MCF 10A (cell line): ENCODE measurements at regions of chr3 and their contacts with region 1.

Region 1: DNA sequence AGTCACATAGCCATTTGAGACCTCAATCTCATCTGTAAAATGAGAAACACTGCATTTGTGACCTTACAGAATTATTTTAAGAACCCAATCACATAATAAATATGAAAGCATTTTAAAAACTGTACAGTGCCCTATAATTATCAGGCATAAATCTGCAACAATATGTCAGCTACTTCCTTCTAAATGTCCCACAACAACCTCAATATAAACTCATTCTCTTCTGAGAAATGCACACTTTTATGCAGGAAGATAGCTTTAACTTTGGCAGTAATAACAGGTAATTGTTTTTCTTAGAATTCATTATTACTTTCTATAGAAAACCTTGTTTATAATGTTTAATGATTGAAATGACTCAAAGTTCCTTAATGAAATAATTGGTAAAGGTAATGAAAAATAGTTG is 400.7 kb upstream of the AGTR1 start:
- DNase-seq: no peak
- H3K4me3 Mint-ChIP-seq: no peak overlapping the region
- H3K27ac Mint-ChIP-seq: no peak overlapping the region
- H3K4me1 Mint-ChIP-seq: no peaks in the 10 kb centered on the region
- H3K27me3 Mint-ChIP-seq: peaks cover 68% of the 10 kb centered on the region
- CTCF ChIP-seq: no peak

Region 2: DNA sequence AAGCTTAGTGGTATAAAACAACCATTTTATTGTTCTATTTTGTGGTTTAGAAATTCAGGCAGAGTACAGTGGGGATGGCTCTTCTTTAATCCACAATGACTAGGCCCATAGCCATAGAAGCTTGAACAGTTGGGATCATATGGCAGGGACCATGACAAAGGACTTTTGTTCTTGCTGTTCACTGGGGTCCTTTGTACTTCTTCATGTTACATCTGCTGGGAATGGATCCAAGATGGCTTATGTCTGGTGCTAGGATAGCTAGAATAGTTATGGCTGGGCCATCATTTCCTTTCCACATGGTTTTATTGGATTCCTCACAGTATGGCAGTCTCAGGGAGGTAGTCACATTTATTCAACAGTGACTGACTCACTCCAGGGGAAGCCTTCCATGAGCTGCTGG is 27.2 kb before region 1 on chr3:
- CTCF ChIA-PET with region 1: no interaction called
- POLR2A ChIA-PET with region 1: no interaction called
- intact Hi-C with region 1: loop called (anchors 1 kb)
- DNase-seq: no peak
- H3K4me3 Mint-ChIP-seq: no peak overlapping the region
- H3K27ac Mint-ChIP-seq: no peak overlapping the region
- H3K4me1 Mint-ChIP-seq: no peaks in the 10 kb centered on the region
- H3K27me3 Mint-ChIP-seq: peaks cover 53% of the 10 kb centered on the region
- CTCF ChIP-seq: no peak

Region 3: GRCh38 chr3:148459931-148460513 is 163.0 kb after region 1 on chr3:
- CTCF ChIA-PET with region 1: no interaction called
- POLR2A ChIA-PET with region 1: no interaction called
- intact Hi-C with region 1: no loop called
- DNase-seq: no peak
- H3K4me3 Mint-ChIP-seq: no peak overlapping the region
- H3K27ac Mint-ChIP-seq: no peak overlapping the region
- H3K4me1 Mint-ChIP-seq: no peaks in the 10 kb centered on the region
- H3K27me3 Mint-ChIP-seq: peaks cover 15% of the 10 kb centered on the region
- CTCF ChIP-seq: peak; percentile 25

Region 4: GRCh38 chr3:148528024-148528423 is 231.0 kb after region 1 on chr3:
- CTCF ChIA-PET with region 1: no interaction called
- POLR2A ChIA-PET with region 1: no interaction called
- intact Hi-C with region 1: no loop called
- DNase-seq: no peak
- H3K4me3 Mint-ChIP-seq: no peak overlapping the region
- H3K27ac Mint-ChIP-seq: no peak overlapping the region
- H3K4me1 Mint-ChIP-seq: no peaks in the 10 kb centered on the region
- H3K27me3 Mint-ChIP-seq: peaks cover 12% of the 10 kb centered on the region
- CTCF ChIP-seq: no peak

Region 5: GRCh38 chr3:148930752-148931151 is 633.7 kb after region 1 on chr3:
- CTCF ChIA-PET with region 1: no interaction called
- POLR2A ChIA-PET with region 1: no interaction called
- intact Hi-C with region 1: no loop called
- DNase-seq: peak; percentile 4
- H3K4me3 Mint-ChIP-seq: no peak overlapping the region
- H3K27ac Mint-ChIP-seq: no peak overlapping the region
- H3K4me1 Mint-ChIP-seq: no peaks in the 10 kb centered on the region
- H3K27me3 Mint-ChIP-seq: peaks cover 71% of the 10 kb centered on the region
- CTCF ChIP-seq: no peak